ENCODE measurements at regions of chr1 and their contacts with region 1.

Region 1: GRCh38 chr1:62407405-62408009 is 29.3 kb upstream of the USP1 start:
- DNase-seq: peak; percentile 53
- ATAC-seq: peak; percentile 68
- H3K4me3 ChIP-seq: no peak overlapping the region
- H3K27ac ChIP-seq: no peak overlapping the region
- H3K4me1 ChIP-seq: peaks cover 9% of the 10 kb centered on the region; the same call in 1 of the 2 replicates
- H3K27me3 ChIP-seq: no peaks in the 10 kb centered on the region
- CTCF ChIP-seq: peak; percentile 82
- EP300 ChIP-seq: no peak
- POLR2A ChIP-seq: no peak
- RAD21 ChIP-seq: peak; percentile 83

Region 2: DNA sequence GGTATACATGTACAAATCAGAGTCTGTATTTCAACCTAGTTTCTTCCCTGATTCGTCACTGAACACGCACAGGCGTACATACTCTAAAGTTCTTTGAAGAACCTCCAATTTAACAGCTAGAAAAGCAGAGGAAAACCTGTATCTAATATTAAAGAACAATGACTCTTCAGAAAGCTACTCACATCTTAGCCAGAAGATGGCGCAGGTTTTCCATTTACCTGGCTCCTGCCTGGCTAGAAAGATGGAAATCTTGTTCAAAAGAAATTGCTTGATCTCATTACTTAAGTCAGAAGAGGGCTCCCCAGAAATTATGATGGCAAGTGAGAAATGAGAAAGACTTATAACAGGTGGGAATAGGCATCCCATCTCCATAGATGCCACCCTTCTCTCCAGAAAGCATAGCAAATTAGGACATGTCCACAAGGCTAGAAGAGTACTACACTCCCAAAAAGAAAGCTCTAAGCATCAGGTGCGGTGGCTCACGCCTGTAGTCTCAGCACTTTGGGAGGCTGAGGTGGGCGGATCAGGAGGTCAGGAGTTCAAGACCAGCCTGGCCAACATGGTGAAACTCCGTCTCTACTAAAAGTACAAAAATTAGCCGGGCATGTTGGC is 231.8 kb before region 1 on chr1:
- CTCF ChIA-PET with region 1: interaction called, 35 read pairs
- POLR2A ChIA-PET with region 1: no interaction called
- in situ Hi-C with region 1: loop called (anchors 5 kb)
- intact Hi-C with region 1: loop called (anchors 1 kb)
- DNase-seq: peak; percentile 47
- ATAC-seq: peak; percentile 52
- H3K4me3 ChIP-seq: no peak overlapping the region
- H3K27ac ChIP-seq: no peak overlapping the region
- H3K4me1 ChIP-seq: peaks cover 22% of the 10 kb centered on the region
- H3K27me3 ChIP-seq: no peaks in the 10 kb centered on the region; a peak in 1 of 5 replicates
- CTCF ChIP-seq: peak; percentile 82
- EP300 ChIP-seq: no peak
- POLR2A ChIP-seq: no peak
- RAD21 ChIP-seq: peak; percentile 68

Region 3: GRCh38 chr1:62241377-62242131 is 166.0 kb before region 1 on chr1:
- CTCF ChIA-PET with region 1: no interaction called
- POLR2A ChIA-PET with region 1: no interaction called
- in situ Hi-C with region 1: no loop called
- intact Hi-C with region 1: loop called (anchors 5 kb)
- DNase-seq: peak; percentile 91
- ATAC-seq: peak; percentile 91
- H3K4me3 ChIP-seq: peak overlapping the region in 1 of 3 experiments; percentile 22; a peak in 2 of 6 replicates
- H3K27ac ChIP-seq: peak overlapping the region; percentile 66
- H3K4me1 ChIP-seq: peaks cover 75% of the 10 kb centered on the region
- H3K27me3 ChIP-seq: no peaks in the 10 kb centered on the region
- CTCF ChIP-seq: peak; percentile 37
- EP300 ChIP-seq: peak in 1 of 2 experiments; percentile 71; a peak in 2 of 4 replicates
- POLR2A ChIP-seq: no peak
- RAD21 ChIP-seq: peak; percentile 29; the same call in 1 of the 2 replicates

Region 4: GRCh38 chr1:62294261-62294660 is 113.2 kb before region 1 on chr1:
- CTCF ChIA-PET with region 1: interaction called, 7 read pairs
- POLR2A ChIA-PET with region 1: no interaction called
- in situ Hi-C with region 1: no loop called
- intact Hi-C with region 1: loop called (anchors 1 kb)
- DNase-seq: peak; percentile 40
- ATAC-seq: peak; percentile 84
- H3K4me3 ChIP-seq: no peak overlapping the region
- H3K27ac ChIP-seq: no peak overlapping the region
- H3K4me1 ChIP-seq: peaks cover 26% of the 10 kb centered on the region
- H3K27me3 ChIP-seq: no peaks in the 10 kb centered on the region
- CTCF ChIP-seq: peak; percentile 57
- EP300 ChIP-seq: no peak
- POLR2A ChIP-seq: no peak
- RAD21 ChIP-seq: peak; percentile 62

Region 5: DNA sequence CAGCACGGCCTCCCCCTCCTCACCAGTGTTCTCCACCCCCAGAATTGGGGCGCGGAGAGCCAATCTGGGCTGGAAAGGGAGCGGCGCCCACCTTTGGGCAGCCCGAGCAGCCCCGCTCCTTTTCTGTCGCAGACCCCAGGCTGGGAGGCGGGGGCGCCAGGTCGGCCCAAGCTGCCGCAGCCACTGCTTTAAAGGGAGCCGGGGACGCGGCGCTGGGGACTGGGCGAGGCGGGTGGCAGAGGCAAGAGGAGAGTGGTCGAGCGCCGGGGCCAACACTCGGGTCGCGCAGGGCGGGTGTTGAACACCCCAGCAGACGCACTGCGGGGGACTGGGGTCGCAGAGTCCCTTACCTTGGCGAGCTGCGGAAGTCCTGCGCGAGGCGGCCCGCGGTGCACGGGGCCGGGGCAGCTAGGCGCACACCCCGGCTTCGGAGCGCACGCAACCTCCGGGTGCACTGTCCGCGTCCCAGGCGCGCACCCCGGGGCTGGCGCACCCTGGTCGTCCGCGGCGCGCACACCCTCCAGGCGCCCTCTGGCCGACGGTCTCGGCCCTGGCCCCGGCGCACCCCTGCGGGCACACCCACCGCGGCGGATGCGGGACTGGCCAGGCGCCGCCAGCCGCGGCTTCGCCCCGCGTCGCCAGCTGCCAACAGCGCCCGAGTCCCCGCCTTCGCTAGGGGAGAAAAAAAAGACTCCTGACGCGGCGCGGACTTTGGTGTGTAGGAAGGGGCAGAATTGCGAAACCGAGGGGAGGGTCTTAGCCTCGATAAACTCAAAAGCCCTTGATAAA is 88.6 kb before region 1 on chr1 and contains the start of gene KANK4:
- CTCF ChIA-PET with region 1: no interaction called
- POLR2A ChIA-PET with region 1: no interaction called
- in situ Hi-C with region 1: no loop called
- intact Hi-C with region 1: loop called (anchors 2 kb)
- DNase-seq: peak; percentile 77
- ATAC-seq: peak; percentile 77
- H3K4me3 ChIP-seq: peak within 1 kb of the TSS; percentile 90 to 96 (median 93)
- H3K27ac ChIP-seq: peak within 1 kb of the TSS; percentile 62
- H3K4me1 ChIP-seq: peaks cover 75% of the 10 kb centered on the region
- H3K27me3 ChIP-seq: no peaks in the 10 kb centered on the region
- CTCF ChIP-seq: no peak; the same call in 1 of the 2 replicates
- EP300 ChIP-seq: peak in 1 of 2 experiments; percentile 50; a peak in 1 of 4 replicates
- POLR2A ChIP-seq: peak in 1 of 2 experiments; percentile 57; a peak in 1 of 4 replicates
- RAD21 ChIP-seq: peak; percentile 63
- total RNA-seq, gene KANK4: 25.7 and 28.8 TPM in 2 replicates

Region 6: DNA sequence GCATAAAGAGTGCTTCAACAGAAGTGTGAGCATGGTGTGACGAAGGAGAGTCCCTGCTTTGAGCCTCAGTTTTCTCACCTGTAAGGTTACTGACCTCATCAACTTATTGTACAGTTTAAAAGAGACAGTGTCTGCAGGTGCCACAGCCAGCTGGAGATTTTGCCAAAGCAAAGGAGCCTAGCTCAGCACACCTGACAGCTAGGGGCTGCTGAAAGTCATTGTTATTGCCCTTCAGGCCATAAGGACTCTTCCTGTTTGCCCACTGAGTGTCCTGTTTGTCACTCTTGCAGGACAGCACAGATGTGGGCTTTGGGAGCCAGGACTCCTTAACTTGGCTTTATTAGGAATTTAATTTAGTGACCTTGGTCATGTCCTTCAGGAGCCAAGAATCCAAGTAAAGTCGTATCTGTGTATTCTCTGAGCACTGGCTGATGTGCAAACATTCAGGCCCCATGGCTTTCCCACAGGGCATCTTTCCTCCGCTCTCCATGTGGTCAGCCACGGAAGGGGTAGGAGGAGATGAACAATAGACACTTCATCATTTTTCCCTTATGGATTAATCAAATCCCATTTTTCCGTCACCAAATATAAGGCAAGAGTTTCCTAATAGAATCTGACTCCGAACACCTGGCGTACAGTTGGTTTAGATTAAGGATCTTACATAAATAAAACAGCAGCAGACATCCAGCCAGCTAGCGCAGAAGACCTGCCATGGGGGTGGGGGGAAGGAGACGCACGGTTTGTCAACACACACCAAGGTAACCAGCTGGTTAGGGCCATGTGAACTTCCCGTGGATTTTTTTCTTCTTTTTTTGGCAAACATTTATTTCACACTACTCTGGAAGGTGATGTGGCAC is 45.2 kb before region 1 on chr1:
- CTCF ChIA-PET with region 1: no interaction called
- POLR2A ChIA-PET with region 1: no interaction called
- in situ Hi-C with region 1: no loop called
- intact Hi-C with region 1: no loop called
- DNase-seq: no peak
- ATAC-seq: peak; percentile 58
- H3K4me3 ChIP-seq: no peak overlapping the region
- H3K27ac ChIP-seq: no peak overlapping the region
- H3K4me1 ChIP-seq: peaks cover 31% of the 10 kb centered on the region
- H3K27me3 ChIP-seq: no peaks in the 10 kb centered on the region
- CTCF ChIP-seq: no peak
- EP300 ChIP-seq: no peak
- POLR2A ChIP-seq: no peak
- RAD21 ChIP-seq: no peak